ENCODE measurements at regions of chr1 and their contacts with region 1.

Region 1: GRCh38 chr1:231626535-231626945 is at the start of gene DISC1:
- DNase-seq: peak in 9 of 10 donors; percentile 44 to 94 (median 65)

Region 2: DNA sequence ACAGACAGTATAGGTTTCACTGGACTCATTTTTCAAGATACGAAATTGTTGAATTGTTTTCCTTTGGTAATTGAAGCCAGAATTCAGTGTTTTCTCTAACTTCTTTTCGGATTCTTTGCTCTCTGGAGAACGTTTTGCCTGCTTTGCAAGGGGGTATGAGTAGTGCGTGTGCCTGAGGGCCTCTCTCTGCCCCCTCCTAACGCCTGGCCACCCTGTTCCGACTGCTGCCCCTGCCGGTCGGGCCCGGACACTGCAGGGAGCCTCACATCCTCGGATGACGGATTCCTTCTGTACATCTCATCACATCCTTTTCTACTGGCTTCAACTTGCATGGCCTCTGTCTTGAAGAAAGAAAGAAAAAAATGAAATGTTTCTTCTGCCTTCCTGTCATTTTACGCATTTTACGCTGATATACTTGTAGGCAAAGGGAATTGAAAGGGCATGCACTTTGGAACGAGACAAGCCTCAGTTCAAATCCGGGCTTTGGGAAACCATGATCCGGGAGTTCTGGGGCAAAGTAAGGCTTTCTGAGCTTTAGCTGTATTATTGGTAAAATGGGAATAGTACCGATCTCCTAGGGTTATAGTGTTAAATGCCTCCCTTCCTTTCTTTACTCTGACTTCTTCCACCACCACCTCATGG is 65.2 kb after region 1 on chr1:
- intact Hi-C with region 1: loop called (anchors 10 kb)
- DNase-seq: peak in 8 of 10 donors; percentile 23 to 93 (median 53)

Region 3: DNA sequence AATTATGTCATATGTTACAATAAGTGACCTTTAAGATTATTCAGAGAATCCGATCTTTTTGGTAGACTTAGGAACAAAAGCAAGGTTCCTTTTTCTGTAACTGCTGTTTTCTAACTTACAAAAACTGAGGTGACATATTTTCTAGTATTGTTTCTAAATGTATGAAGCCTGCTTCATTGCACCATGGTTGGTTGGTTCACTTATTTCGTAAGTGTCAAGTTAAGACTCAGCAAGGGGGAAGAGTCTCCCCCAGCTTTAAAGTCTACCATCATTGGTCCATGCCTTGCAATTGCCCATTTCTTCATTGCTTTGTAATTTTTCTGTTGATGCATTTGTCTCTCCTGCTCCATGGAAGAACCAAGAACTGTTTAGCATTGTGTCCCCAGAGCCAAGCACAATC is 136.9 kb after region 1 on chr1:
- intact Hi-C with region 1: no loop called
- DNase-seq: no peak